GM12878 (cell line): ENCODE measurements at regions of chr3 and their contacts with region 1.

Region 1: DNA sequence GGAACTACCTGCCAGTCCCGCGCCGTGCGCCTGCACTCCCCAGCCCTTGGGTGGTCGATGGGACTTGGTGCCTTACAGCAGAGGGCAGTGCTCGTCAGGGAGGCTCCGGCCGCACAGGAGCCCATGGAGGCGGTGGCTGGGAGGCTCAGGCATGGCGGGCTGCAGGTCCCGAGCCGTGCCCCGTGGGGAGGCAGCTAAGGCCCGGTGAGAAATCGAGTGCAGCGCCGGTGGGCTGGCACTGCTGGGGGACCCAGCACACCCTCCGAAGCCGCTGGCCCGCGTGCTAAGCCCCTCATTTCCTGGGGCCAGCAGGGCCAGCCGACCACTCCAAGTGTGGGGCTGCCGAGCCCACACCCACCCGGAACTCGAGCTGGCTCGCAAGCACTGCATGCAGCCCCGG is 580.2 kb downstream of the ZIC1 start:
- DNase-seq: no peak
- ATAC-seq: no peak
- H3K4me3 ChIP-seq: no peak overlapping the region
- H3K27ac ChIP-seq: no peak overlapping the region
- H3K4me1 ChIP-seq: no peaks in the 10 kb centered on the region
- H3K27me3 ChIP-seq: no peaks in the 10 kb centered on the region
- CTCF ChIP-seq: no peak
- EP300 ChIP-seq: no peak
- POLR2A ChIP-seq: no peak
- RAD21 ChIP-seq: no peak

Region 2: DNA sequence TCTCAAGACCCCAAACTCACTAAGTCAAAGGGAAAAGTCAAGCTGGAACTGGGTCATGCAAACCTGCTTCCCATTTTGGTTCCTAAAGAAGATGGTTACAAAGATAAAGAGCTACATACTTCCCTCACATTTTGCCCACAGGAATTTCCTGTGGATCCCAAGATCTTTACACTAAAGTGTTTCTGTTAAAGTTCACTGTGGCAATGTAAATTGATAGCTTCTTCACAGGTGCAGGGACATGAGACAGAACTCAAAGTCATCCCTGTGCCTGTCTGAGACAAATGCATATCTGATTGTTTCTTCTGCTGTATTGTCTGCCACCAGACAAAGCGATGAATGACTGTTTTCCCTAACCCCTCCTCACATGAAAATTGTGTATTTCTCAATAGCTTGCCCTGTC is 12.3 kb before region 1 on chr3:
- CTCF ChIA-PET with region 1: no interaction called
- POLR2A ChIA-PET with region 1: no interaction called
- RAD21 ChIA-PET with region 1: no interaction called
- SMC1A ChIA-PET with region 1: interaction called, 3 read pairs
- in situ Hi-C with region 1: no loop called
- intact Hi-C with region 1: loop called (anchors 1 kb)
- DNase-seq: no peak
- ATAC-seq: no peak
- H3K4me3 ChIP-seq: no peak overlapping the region
- H3K27ac ChIP-seq: no peak overlapping the region
- H3K4me1 ChIP-seq: no peaks in the 10 kb centered on the region
- H3K27me3 ChIP-seq: no peaks in the 10 kb centered on the region
- CTCF ChIP-seq: no peak
- EP300 ChIP-seq: no peak
- POLR2A ChIP-seq: no peak
- RAD21 ChIP-seq: no peak